ENCODE measurements at regions of chr5 and their contacts with region 1.

Region 1: GRCh38 chr5:150386024-150386864 is 26.5 kb downstream of the CD74 start:
- DNase-seq: no peak
- H3K27ac ChIP-seq: peak overlapping the region; percentile 42
- CTCF ChIP-seq: no peak

Region 2: GRCh38 chr5:150103666-150104549 is 282.3 kb before region 1 on chr5:
- CTCF ChIA-PET with region 1: no interaction called
- POLR2A ChIA-PET with region 1: no interaction called
- DNase-seq: no peak
- H3K27ac ChIP-seq: no peak overlapping the region
- CTCF ChIP-seq: no peak

Region 3: GRCh38 chr5:150192462-150192861 is 193.8 kb before region 1 on chr5:
- CTCF ChIA-PET with region 1: no interaction called
- POLR2A ChIA-PET with region 1: no interaction called
- DNase-seq: no peak
- H3K27ac ChIP-seq: no peak overlapping the region
- CTCF ChIP-seq: no peak

Region 4: GRCh38 chr5:150398722-150399523 is 12.7 kb after region 1 on chr5:
- CTCF ChIA-PET with region 1: interaction called, 12 read pairs
- POLR2A ChIA-PET with region 1: no interaction called
- DNase-seq: no peak
- H3K27ac ChIP-seq: peak overlapping the region; percentile 24
- CTCF ChIP-seq: no peak

Measured in RWPE1 (cell line).